ENCODE measurements at regions of chr20 and their contacts with region 1.

Region 1: GRCh38 chr20:63707549-63708300 is at the starts of genes ARFRP1 and ZGPAT:
- DNase-seq: peak; percentile 93
- H3K4me3 Mint-ChIP-seq: peak within 1 kb of the TSS; percentile 90
- H3K27ac Mint-ChIP-seq: peak within 1 kb of the TSS; percentile 87
- H3K4me1 Mint-ChIP-seq: peaks cover 59% of the 10 kb centered on the region
- H3K27me3 Mint-ChIP-seq: no peaks in the 10 kb centered on the region
- total RNA-seq, gene ARFRP1: 52.9 to 53.4 TPM
- total RNA-seq, gene ZGPAT: 41.6 to 42.8 TPM

Region 2: DNA sequence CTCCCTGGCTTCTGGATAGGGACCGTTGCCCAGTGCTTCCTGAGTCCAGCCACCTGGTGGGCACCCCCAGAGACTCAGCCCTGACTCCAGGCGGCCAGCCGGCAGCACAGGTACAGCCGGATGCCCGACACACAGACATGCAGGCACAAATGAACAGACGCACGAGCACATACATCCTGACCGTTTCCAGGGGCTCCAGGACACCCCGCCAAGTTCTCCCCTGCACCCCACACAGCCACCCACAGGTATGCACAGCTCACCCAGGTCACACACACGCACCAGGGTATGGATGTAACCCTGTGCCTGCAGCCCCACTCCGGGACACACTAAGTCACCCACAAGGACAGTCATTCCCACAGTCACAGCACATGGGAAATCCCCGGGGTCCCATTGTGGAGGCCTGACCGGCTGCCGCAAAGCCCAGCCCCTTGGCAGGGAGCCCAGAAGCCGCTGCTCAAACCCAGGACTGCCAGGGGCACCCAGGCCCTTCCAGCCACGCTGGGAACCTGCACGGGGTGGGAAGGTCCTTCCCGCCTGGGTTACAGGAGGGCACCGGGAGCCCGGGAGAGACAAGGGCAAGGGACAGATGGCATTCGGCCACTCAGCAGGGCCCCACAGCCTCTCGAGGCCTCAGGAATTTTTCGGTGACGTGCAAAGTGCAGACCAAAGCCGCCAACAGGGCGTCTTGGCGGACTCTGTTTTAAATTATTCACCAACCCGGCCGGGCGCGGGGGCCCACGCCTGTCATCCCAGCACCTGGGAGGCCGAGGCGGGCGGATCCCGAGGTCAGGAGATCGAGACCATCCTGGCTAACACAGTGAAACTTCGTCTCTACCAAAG is 224.6 kb before region 1 on chr20:
- CTCF ChIA-PET with region 1: no interaction called
- POLR2A ChIA-PET with region 1: no interaction called
- DNase-seq: no peak
- H3K4me3 Mint-ChIP-seq: no peak overlapping the region
- H3K27ac Mint-ChIP-seq: no peak overlapping the region
- H3K4me1 Mint-ChIP-seq: no peaks in the 10 kb centered on the region
- H3K27me3 Mint-ChIP-seq: peaks cover 12% of the 10 kb centered on the region

Region 3: DNA sequence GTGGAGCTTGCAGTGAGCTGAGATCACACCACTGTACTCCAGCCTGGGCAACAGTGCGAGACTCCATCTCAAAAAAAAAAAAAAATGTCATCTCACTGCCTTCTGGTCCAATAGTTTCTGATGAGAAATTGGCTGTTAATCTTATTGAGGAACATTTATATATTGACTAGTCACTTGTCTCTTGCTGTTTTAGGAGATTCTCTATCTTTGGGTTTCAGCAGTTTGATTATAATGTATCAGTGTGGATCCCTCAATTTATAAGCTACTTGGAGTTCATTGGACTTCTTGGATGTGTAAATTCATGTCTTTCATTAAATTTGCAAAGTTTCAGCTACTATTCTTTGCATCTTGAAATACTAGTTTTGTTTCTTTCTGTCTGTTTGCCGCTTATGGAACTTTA is 11.3 kb after region 1 on chr20:
- CTCF ChIA-PET with region 1: interaction called, 13 read pairs
- POLR2A ChIA-PET with region 1: interaction called, 4 read pairs
- DNase-seq: no peak
- H3K4me3 Mint-ChIP-seq: no peak overlapping the region
- H3K27ac Mint-ChIP-seq: no peak overlapping the region
- H3K4me1 Mint-ChIP-seq: peaks cover 37% of the 10 kb centered on the region
- H3K27me3 Mint-ChIP-seq: no peaks in the 10 kb centered on the region

Region 4: DNA sequence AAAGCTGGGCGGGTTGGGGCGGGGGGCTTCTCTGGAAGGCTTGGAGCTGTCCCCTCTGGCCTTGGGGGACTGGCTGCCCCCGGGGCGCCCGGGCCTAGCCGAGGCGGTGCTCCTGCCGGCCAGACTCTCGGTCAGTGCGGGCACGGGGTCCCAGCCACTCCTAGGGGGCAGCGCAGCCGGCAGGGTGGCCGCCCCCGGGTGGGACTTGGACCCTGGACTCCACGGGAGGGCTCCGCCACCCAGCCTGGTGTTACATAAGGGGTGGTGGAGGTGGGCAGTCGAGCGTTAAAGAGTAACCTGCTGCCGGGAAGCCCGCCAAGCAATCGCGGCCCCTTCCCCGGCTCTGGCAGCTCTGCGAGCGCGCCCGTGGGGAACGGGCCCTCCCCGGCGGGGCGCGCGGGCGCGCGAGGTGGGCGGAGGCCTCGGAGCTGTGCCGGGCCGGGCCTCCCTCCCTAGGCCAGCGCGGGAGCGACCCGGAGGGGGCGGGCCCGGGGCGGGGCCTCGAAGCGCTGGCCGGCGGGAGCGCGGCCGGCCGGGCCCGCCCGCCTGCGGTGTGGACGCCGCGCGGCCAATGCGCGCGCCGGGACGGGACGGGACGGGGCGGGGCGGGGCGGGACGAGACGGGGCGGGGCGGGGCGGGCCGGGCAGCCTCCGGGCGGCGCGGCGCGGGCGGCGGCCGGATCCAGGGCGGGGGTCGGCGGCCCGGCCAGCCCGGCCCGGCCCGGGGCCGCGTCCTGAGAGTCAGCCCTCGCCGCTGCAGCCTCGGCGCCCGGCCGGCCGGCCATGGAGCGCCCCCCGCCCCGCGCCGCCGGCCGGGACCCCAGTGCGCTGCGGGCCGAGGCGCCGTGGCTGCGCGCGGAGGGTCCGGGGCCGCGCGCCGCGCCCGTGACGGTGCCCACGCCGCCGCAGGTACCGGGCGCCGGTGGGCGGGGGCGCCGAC is 31.7 kb after region 1 on chr20 and contains the start of gene SLC2A4RG:
- CTCF ChIA-PET with region 1: interaction called, 35 read pairs
- POLR2A ChIA-PET with region 1: interaction called, 120 read pairs
- DNase-seq: peak; percentile 76
- H3K4me3 Mint-ChIP-seq: peak within 1 kb of the TSS; percentile 62
- H3K27ac Mint-ChIP-seq: peak within 1 kb of the TSS; percentile 16
- H3K4me1 Mint-ChIP-seq: peaks cover 18% of the 10 kb centered on the region
- H3K27me3 Mint-ChIP-seq: no peaks in the 10 kb centered on the region
- total RNA-seq, gene SLC2A4RG: 88.3 to 90.4 TPM

Measured in activated CD4-positive, alpha-beta memory T cell treated with anti-CD3 and anti-CD28 coated beads, Interleukin-2, amount 10 ng/mL, durations not matched to agents 7 days and 5 days (primary cell).